Activated T-helper 2 cell treated with anti-CD3 and anti-CD28 coated beads, Interferon-gamma antibody, Interleukin-2, Interleukin-4, amounts not matched to agents 10 μg/mL and 5 μg/mL and 100 μg/mL, durations not matched to agents 14 hours and 24 hours and 36 hours (primary cell): ENCODE measurements at regions of chr2 and their contacts with region 1.

Region 1: GRCh38 chr2:102366406-102367112 is 11.0 kb downstream of the IL18R1 start:
- DNase-seq: no peak
- H3K4me3 Mint-ChIP-seq: peak overlapping the region; percentile 63
- H3K27ac Mint-ChIP-seq: peak overlapping the region; percentile 96
- H3K4me1 Mint-ChIP-seq: peaks cover 78% of the 10 kb centered on the region
- H3K27me3 Mint-ChIP-seq: no peaks in the 10 kb centered on the region

Region 2: DNA sequence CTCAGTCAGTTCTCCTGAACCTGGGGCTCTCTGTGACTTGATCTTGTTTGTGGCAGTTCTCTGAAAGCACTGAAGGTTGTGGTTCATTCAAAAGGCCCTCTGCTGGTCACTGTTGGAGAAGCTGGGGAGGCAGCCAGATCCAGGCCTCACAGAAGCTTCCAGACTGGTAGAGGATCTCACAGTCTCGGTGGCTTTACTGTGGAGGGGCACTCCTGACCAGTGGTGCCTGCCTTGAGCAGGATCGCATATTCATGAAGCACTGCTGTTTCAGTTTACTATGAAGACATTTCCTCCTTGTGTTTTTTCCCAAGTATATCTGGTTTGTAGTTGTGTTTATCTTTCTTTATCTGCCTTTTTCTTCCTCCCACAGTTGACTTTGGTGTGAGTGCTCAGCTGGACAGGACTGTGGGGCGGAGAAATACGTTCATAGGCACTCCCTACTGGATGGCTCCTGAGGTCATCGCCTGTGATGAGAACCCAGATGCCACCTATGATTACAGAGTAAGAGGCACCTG is 535.2 kb before region 1 on chr2:
- intact Hi-C with region 1: loop called (anchors 10 kb)
- DNase-seq: peak; percentile 33
- H3K4me3 Mint-ChIP-seq: no peak overlapping the region
- H3K27ac Mint-ChIP-seq: peak overlapping the region; percentile 61
- H3K4me1 Mint-ChIP-seq: peaks cover 50% of the 10 kb centered on the region
- H3K27me3 Mint-ChIP-seq: no peaks in the 10 kb centered on the region

Region 3: DNA sequence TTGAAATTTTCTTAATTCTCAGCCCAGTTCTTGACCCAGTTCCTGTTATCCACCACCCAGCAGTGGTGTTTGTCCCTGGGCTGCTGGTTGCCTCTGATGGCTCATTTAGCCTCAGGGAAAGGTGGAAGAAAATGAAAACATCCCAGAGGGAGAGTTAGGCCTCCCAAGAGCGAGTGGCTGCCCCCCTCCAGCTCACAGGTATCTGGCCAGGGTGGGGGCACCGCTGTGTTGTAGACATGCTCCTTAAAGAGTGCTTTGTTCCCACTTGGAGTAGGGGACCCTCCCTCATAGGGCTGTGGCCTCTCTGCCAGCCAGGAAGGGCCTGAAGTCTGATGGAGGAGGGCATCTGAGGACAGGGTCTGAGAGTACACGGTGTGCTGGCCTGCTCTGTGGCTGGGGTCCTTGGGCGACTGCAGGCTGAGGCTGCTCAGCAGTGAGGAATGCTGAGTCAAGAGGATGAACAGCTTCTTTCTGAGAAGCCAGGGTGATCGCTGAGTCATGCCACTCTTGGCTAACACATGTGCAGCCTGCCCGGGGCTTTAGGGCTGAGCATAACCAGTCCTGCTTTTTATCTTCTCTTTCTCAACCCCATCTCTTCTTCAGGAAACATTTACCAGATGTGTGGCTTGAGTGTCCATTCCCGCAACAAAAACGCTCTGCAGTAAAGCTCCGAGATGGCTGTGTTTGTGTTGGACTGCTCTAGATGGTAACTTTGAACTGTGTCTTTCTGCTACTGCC is 302.4 kb before region 1 on chr2:
- intact Hi-C with region 1: loop called (anchors 1 kb)
- DNase-seq: no peak
- H3K4me3 Mint-ChIP-seq: no peak overlapping the region
- H3K27ac Mint-ChIP-seq: no peak overlapping the region
- H3K4me1 Mint-ChIP-seq: peaks cover 24% of the 10 kb centered on the region
- H3K27me3 Mint-ChIP-seq: peaks cover 11% of the 10 kb centered on the region

Region 4: GRCh38 chr2:102126651-102127050 is 239.9 kb before region 1 on chr2:
- intact Hi-C with region 1: loop called (anchors 5 kb)
- DNase-seq: no peak
- H3K4me3 Mint-ChIP-seq: no peak overlapping the region
- H3K27ac Mint-ChIP-seq: no peak overlapping the region
- H3K4me1 Mint-ChIP-seq: peaks cover 13% of the 10 kb centered on the region
- H3K27me3 Mint-ChIP-seq: peaks cover 31% of the 10 kb centered on the region

Region 5: DNA sequence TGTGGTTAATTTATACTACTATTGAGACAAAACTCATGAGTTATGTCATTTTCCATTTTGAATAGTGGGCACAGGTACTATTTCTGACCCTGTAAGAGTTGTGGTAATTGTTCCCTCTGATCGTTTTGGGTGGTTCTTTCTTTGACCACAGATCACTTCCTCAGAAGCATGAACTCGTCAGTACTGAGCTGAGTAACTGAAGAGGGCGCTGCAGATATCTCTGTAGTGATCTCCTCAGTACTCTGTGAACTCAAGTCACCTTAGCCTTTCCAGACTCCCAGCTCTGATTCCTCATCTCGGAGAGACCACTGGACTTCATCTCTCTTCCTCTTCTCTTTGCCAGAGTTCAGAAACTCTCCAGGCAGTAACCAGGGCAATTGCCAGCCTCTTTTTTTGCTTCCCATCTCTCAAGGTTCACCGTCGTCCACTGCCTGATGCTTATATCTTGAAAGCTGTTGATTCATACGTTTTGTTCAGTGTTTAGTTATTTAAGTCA is 64.6 kb before region 1 on chr2:
- intact Hi-C with region 1: loop called (anchors 1 kb)
- DNase-seq: peak; percentile 55
- H3K4me3 Mint-ChIP-seq: peak overlapping the region; percentile 59
- H3K27ac Mint-ChIP-seq: peak overlapping the region; percentile 96
- H3K4me1 Mint-ChIP-seq: peaks cover 76% of the 10 kb centered on the region
- H3K27me3 Mint-ChIP-seq: no peaks in the 10 kb centered on the region

Region 6: DNA sequence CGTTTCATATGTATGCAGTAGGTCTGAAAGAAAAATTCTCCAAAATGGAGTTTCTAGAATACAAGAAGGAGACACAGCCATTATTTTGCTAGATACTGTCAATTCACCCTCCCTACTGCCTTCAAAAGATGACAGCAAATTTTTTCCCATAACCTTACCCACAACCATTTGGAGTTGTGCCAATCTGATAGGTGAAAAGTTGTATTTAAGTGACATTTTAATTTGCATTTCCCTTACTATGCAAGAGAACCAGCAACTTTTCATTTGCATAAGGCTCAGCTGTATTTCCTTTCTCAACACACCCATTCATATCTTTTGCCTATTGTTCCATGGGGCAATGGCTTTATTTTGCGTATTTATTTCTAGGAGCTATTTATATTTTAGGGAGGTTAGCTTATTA is 25.0 kb after region 1 on chr2:
- intact Hi-C with region 1: no loop called
- DNase-seq: no peak
- H3K4me3 Mint-ChIP-seq: no peak overlapping the region
- H3K27ac Mint-ChIP-seq: no peak overlapping the region
- H3K4me1 Mint-ChIP-seq: peaks cover 15% of the 10 kb centered on the region
- H3K27me3 Mint-ChIP-seq: no peaks in the 10 kb centered on the region

Region 7: DNA sequence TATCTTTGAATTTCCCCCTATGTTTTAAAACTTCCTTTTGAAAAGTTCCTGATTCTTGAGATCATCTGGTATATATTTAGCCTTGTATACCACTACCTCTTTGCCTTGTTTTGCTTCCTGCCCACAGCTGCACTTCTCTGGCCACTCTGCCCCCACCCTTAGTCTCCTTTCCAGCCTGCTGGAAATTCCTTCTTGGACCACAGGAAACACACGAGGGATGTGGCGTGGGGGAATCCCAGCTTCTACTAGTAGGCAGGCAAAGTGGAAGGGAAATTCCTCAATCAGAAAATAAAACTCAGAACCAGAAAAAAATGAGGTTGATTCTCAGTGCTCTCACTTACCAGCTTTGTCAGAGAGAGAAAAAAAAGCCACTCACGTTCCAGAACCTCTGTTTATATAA is 69.8 kb after region 1 on chr2:
- intact Hi-C with region 1: loop called (anchors 1 kb)
- DNase-seq: no peak
- H3K4me3 Mint-ChIP-seq: peak overlapping the region; percentile 9
- H3K27ac Mint-ChIP-seq: peak overlapping the region; percentile 63
- H3K4me1 Mint-ChIP-seq: peaks cover 32% of the 10 kb centered on the region
- H3K27me3 Mint-ChIP-seq: no peaks in the 10 kb centered on the region